Endothelial cell of umbilical vein (primary cell): ENCODE measurements at regions of chr2 and their contacts with region 1.

Region 1: DNA sequence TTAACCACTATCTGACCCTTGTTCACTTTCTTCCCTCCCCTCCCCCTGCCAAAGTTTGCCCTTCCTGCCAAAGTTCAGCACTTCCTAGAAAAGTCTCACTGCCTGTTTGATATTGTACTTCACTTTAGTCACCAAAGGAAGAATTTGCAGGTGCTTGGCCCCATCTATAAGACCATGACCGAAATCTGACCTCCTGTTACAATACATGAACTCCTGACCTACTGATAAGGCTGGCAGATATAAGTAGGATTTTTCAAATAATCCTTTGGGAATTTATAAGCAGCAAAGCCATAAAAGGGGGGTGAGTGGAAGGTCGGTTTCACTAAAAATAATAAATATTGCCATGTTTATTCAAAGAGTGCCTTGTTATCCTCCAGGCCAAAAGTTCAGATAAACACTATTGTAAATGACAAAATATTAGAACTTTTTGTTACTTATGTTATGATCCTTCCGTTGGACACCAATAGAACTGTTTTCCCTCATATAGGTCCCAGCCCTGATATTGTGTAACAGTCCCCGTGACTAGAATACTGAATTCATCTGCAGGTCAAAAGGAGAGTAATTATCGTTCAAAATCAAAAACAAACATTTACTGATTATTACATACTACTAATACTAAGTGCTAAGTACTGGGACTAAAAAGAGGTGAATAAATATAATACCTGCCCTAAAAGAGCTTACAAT is 277.6 kb downstream of the EXOC6B start:
- DNase-seq: peak; percentile 65
- H3K4me3 ChIP-seq: no peak overlapping the region
- H3K27ac ChIP-seq: peak overlapping the region; percentile 17
- H3K4me1 ChIP-seq: peaks cover 28% of the 10 kb centered on the region
- H3K27me3 ChIP-seq: no peaks in the 10 kb centered on the region
- CTCF ChIP-seq: no peak
- POLR2A ChIP-seq: no peak

Region 2: DNA sequence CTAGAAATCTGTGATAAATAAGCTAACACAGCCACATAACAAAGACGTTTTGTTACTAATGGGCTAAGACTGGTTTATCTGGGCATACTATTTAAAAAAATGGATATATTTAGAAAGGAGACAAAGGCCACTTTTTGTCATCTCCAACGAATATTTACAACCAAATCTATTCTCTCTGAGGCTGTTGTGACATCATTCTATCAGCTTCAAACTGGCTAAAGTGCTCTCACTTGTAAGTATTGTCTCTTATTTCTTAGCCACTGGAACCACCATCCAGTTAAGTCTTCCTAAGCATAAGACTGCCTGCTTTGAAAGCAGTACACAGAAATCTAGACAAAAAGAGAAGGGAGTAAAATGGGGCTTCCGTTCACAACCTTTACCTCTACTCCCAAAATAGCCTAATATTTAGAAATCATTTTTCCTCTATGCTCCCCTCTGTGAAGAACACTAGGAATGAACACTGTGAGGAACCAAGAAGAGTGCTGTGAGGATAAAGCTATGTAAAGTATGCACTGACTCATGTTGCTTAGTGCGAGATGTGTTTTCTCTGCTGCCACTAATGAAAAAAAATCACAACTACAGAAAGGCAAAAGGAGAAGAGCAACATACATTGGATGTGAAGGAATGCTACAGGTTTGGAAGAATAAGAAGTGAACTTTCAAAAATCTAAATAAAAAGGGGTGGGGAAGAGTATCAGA is 13.5 kb after region 1 on chr2:
- CTCF ChIA-PET with region 1: interaction called, 3 read pairs
- POLR2A ChIA-PET with region 1: no interaction called
- dilution Hi-C with region 1: no loop called
- intact Hi-C with region 1: loop called (anchors 1 kb)
- DNase-seq: peak; percentile 78
- H3K4me3 ChIP-seq: peak overlapping the region in 1 of 3 experiments; percentile 35
- H3K27ac ChIP-seq: peak overlapping the region; percentile 92
- H3K4me1 ChIP-seq: peaks cover 35% of the 10 kb centered on the region
- H3K27me3 ChIP-seq: no peaks in the 10 kb centered on the region
- CTCF ChIP-seq: no peak
- POLR2A ChIP-seq: no peak

Region 3: DNA sequence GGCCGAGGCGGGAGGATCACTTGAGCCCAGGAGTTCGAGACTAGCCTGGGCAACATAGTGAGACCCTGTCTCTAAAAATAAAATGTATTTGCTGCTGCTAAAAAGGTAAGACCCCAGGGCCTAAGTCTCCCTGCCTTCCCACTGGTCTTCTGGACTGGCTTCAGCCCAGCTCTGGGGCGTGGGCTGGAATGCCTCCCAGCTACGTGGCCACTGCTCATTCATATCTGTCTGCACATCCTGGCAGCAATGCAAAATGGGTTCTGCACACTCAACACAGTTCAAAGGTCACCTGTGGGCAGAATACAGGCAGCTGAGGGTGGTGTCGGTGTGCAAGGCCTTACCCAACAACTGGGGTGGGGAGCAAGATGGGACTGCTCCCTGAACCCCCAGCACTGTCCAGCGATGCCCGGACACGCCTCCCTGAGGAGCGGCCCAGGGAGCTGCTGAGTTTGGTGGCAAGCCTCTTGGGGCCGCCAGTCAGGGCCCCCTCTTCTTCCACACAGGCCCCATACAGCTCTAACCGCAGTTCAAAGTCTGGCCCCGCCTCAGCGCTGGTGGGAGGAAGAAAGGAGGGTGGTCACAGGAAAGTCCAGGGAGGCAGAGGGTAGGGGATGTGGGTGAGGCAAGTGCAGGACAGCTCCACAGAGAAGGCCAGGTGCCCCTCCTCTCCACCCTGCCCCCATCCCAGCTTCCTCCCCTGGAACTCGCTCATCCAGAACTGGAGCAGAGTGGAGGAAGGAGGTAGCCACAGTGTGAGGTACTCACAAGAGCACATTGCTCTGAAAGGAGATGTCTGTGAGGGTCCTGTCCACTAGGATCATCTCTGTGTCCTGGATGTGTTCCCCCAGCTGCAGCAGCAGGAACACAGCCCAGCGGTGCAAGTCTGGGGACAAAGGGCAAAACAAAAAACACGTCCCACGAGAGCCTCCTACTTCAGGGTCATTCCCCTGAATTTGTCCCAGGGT is 1881.5 kb after region 1 on chr2:
- CTCF ChIA-PET with region 1: no interaction called
- POLR2A ChIA-PET with region 1: no interaction called
- dilution Hi-C with region 1: no loop called
- intact Hi-C with region 1: no loop called
- DNase-seq: no peak
- H3K4me3 ChIP-seq: no peak overlapping the region
- H3K27ac ChIP-seq: no peak overlapping the region
- H3K4me1 ChIP-seq: no peaks in the 10 kb centered on the region
- H3K27me3 ChIP-seq: no peaks in the 10 kb centered on the region
- CTCF ChIP-seq: no peak
- POLR2A ChIP-seq: no peak